CD4-positive, alpha-beta T cell (primary cell): ENCODE measurements at regions of chr14 and their contacts with region 1.

Region 1: DNA sequence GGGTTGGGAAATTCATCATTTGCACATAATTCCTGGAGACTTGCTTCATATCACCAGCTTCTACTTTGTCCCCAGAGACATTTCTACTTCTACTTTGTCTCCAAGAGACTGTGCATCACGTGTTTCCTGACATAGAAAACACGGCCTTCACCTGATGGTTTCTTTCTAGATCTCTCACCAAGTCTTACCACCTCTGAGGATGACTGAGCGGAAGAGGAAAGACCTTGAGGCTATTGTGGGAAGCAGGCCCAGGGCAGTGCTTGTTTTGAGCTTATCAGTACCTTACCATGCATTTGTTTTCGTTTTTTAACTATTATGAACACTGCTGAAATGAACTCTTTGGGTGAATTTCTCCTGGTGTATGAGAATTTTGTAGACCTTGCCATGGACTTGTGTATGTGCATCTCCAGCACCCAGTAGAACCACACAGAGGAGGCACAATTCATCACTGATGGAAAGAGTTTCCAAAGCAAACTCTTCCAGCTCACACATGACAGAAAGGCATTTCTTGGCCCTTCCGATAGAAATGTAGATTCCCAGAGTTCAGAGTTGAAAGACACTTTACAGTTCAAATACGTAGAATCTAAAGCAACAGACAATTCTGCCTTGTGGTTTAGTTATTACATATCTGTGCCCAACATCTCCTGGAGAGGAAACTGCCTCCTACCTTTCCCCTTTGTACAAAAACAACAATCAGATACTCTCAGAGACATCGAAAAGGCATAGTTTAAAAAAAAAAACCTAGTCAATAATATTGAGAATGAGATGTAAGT is 434.7 kb downstream of the FUT8 start:
- DNase-seq: peak; percentile 43 to 95 (median 66)
- ATAC-seq: peak; percentile 81
- H3K4me3 ChIP-seq: peak overlapping the region; percentile 33
- H3K4me3 Mint-ChIP-seq: peak overlapping the region; percentile 62
- H3K27ac ChIP-seq: peak overlapping the region; percentile 83 to 87
- H3K27ac Mint-ChIP-seq: peak overlapping the region; percentile 91
- H3K4me1 ChIP-seq: peaks cover 78% of the 10 kb centered on the region
- H3K4me1 Mint-ChIP-seq: peaks cover 93% of the 10 kb centered on the region
- H3K27me3 ChIP-seq: no peaks in the 10 kb centered on the region
- H3K27me3 Mint-ChIP-seq: no peaks in the 10 kb centered on the region
- CTCF ChIP-seq: no peak

Region 2: DNA sequence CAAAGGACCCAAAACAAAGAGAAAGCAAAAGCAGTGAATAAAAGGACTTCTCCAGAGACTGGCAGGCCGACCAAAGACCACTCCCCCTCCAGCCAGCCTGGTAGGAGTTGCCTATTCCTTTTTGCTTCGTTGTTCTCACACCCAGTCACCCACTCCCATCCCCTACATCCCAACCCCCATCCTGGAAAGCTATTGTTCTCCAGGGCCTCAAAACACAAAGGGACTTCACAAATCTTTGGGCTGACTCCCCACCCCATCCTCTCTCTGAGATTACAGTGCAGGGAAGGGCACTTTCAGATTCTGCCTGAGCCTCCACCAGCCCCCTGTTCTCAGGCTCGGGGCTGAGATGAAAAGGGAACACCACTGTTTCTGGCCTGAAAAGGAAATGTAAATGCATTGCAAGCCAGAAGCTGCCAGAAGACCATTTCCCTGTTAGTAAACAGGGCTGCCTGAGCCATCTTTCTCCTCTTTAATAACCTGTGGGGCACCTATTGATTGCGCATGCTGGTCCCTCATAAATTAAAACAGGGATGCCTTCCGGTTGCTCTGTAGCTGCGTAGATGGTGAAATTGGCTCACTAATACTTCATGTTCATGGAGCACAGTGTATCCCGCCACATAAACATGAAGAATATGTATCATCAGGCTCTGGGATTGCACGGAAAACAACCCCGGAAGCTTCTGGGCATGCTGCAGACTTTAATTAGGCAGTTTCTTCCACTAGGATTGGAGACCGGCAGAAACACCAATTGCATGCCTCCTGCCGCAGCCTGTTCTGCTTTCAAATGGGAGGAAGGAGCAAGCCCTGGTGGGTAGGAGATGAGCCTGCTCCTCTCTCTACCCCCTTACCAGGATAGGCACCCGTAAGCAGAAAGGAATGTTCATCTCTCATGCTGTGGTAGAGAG is 565.0 kb before region 1 on chr14:
- CTCF ChIA-PET with region 1: no interaction called
- POLR2A ChIA-PET with region 1: interaction called, 3 read pairs
- intact Hi-C with region 1: loop called in 1 of 2 experiments (anchors 10 kb)
- DNase-seq: peak in 4 of 14 experiments; percentile 32 to 55 (median 35)
- ATAC-seq: peak; percentile 32
- H3K4me3 ChIP-seq: peak overlapping the region; percentile 17
- H3K4me3 Mint-ChIP-seq: peak overlapping the region; percentile 70
- H3K27ac ChIP-seq: peak overlapping the region; percentile 15 to 25
- H3K27ac Mint-ChIP-seq: peak overlapping the region; percentile 84
- H3K4me1 ChIP-seq: peaks cover 32% of the 10 kb centered on the region
- H3K4me1 Mint-ChIP-seq: peaks cover 34% of the 10 kb centered on the region
- H3K27me3 ChIP-seq: no peaks in the 10 kb centered on the region
- H3K27me3 Mint-ChIP-seq: no peaks in the 10 kb centered on the region
- CTCF ChIP-seq: no peak

Region 3: GRCh38 chr14:65832431-65833266 is 14.6 kb before region 1 on chr14:
- CTCF ChIA-PET with region 1: no interaction called
- POLR2A ChIA-PET with region 1: interaction called, 16 read pairs
- intact Hi-C with region 1: no loop called
- DNase-seq: no peak
- ATAC-seq: no peak
- H3K4me3 ChIP-seq: no peak overlapping the region
- H3K4me3 Mint-ChIP-seq: no peak overlapping the region
- H3K27ac ChIP-seq: no peak overlapping the region
- H3K27ac Mint-ChIP-seq: no peak overlapping the region
- H3K4me1 ChIP-seq: peaks cover 16% of the 10 kb centered on the region
- H3K4me1 Mint-ChIP-seq: peaks cover 50% of the 10 kb centered on the region
- H3K27me3 ChIP-seq: no peaks in the 10 kb centered on the region
- H3K27me3 Mint-ChIP-seq: no peaks in the 10 kb centered on the region
- CTCF ChIP-seq: no peak

Region 4: GRCh38 chr14:65860956-65861611 is 13.8 kb after region 1 on chr14:
- CTCF ChIA-PET with region 1: interaction called, 3 read pairs
- POLR2A ChIA-PET with region 1: interaction called, 54 read pairs
- intact Hi-C with region 1: loop called in 1 of 2 experiments (anchors 2 kb)
- DNase-seq: peak in 8 of 14 experiments; percentile 16 to 74 (median 31)
- ATAC-seq: peak; percentile 70
- H3K4me3 ChIP-seq: no peak overlapping the region
- H3K4me3 Mint-ChIP-seq: peak overlapping the region; percentile 40
- H3K27ac ChIP-seq: no peak overlapping the region
- H3K27ac Mint-ChIP-seq: peak overlapping the region; percentile 36
- H3K4me1 ChIP-seq: peaks cover 51% of the 10 kb centered on the region
- H3K4me1 Mint-ChIP-seq: peaks cover 66% of the 10 kb centered on the region
- H3K27me3 ChIP-seq: no peaks in the 10 kb centered on the region
- H3K27me3 Mint-ChIP-seq: no peaks in the 10 kb centered on the region
- CTCF ChIP-seq: no peak

Region 5: GRCh38 chr14:65879248-65880009 is 32.2 kb after region 1 on chr14:
- CTCF ChIA-PET with region 1: no interaction called
- POLR2A ChIA-PET with region 1: interaction called, 24 read pairs
- intact Hi-C with region 1: no loop called
- DNase-seq: no peak
- ATAC-seq: no peak
- H3K4me3 ChIP-seq: no peak overlapping the region
- H3K4me3 Mint-ChIP-seq: no peak overlapping the region
- H3K27ac ChIP-seq: no peak overlapping the region
- H3K27ac Mint-ChIP-seq: peak overlapping the region; percentile 8
- H3K4me1 ChIP-seq: peaks cover 17% of the 10 kb centered on the region
- H3K4me1 Mint-ChIP-seq: peaks cover 26% of the 10 kb centered on the region
- H3K27me3 ChIP-seq: no peaks in the 10 kb centered on the region
- H3K27me3 Mint-ChIP-seq: no peaks in the 10 kb centered on the region
- CTCF ChIP-seq: no peak

Region 6: DNA sequence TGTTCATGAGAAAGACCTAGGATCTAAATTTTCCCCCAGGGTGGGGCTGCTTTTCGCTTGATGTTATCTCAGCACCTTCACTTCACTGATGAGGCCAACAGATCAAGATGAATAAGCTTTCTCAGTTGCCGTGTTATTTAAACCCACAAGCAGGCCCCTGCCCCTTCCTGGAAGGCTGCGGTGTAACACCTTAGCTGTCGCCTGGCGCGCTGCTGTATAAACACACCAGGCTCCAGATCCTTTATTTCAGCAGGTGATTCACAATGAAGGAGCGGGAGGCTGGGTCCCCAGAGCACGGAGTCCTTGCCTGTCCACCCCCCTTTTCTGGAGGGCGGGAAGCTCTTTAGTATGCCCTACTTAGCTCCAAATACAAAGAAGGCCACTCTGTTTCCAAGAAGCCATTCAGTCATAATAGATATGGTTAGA is 80.7 kb after region 1 on chr14:
- CTCF ChIA-PET with region 1: interaction called, 3 read pairs
- POLR2A ChIA-PET with region 1: interaction called, 56 read pairs
- intact Hi-C with region 1: loop called (anchors 1 to 5 kb)
- DNase-seq: peak; percentile 48 to 89 (median 72)
- ATAC-seq: peak; percentile 96
- H3K4me3 ChIP-seq: peak overlapping the region; percentile 9
- H3K4me3 Mint-ChIP-seq: peak overlapping the region; percentile 77
- H3K27ac ChIP-seq: peak overlapping the region in 1 of 2 donors; percentile 35
- H3K27ac Mint-ChIP-seq: peak overlapping the region; percentile 90
- H3K4me1 ChIP-seq: peaks cover 58% of the 10 kb centered on the region
- H3K4me1 Mint-ChIP-seq: peaks cover 58% of the 10 kb centered on the region
- H3K27me3 ChIP-seq: no peaks in the 10 kb centered on the region
- H3K27me3 Mint-ChIP-seq: no peaks in the 10 kb centered on the region
- CTCF ChIP-seq: peak; percentile 16

Region 7: GRCh38 chr14:65958664-65959562 is 111.7 kb after region 1 on chr14:
- CTCF ChIA-PET with region 1: interaction called, 5 read pairs
- POLR2A ChIA-PET with region 1: interaction called, 32 read pairs
- intact Hi-C with region 1: loop called in 1 of 2 experiments (anchors 10 kb)
- DNase-seq: peak in 4 of 14 experiments; percentile 5 to 68 (median 60)
- ATAC-seq: peak; percentile 58
- H3K4me3 ChIP-seq: no peak overlapping the region
- H3K4me3 Mint-ChIP-seq: no peak overlapping the region
- H3K27ac ChIP-seq: no peak overlapping the region
- H3K27ac Mint-ChIP-seq: no peak overlapping the region
- H3K4me1 ChIP-seq: peaks cover 27% of the 10 kb centered on the region
- H3K4me1 Mint-ChIP-seq: peaks cover 26% of the 10 kb centered on the region
- H3K27me3 ChIP-seq: no peaks in the 10 kb centered on the region
- H3K27me3 Mint-ChIP-seq: no peaks in the 10 kb centered on the region
- CTCF ChIP-seq: peak; percentile 83